ENCODE measurements at regions of chr1 and their contacts with region 1.

Region 1: DNA sequence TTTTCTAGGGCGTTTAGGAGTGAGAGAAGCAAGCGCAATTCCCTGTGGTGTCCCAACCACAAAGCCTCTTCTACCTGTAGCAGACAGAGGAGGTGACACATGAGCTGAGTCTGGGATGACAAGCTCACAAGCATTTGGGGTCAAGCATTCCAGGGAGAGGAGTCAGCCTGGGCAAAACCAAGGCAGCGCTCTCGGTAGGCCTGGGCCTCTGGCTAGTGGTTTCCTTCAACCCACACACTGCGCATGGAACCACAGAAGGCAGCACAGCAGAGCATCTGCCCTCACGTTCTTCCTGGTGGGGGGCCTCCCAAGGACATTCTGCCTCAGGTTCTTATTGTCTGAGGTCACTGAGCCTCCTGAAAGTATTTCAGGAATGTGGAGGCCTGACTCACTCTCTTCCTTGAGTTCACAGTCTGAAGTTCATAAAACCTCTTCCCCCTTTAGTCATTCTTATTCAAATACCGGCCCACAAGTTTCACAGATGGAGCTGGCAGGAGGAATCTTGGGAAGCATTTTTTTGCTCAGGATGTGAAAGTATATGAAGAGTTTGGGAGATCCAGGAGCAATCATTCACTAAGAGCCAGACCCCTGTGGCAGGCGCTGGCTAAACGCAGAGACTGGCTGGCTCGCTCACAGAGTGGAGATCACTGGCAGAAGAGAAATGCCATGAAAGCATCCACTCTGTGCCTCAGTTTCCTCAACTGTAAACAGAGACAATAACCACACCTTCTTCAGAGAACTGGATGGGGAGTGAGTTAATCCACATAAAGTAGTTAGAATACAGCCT is 26.8 kb downstream of the CCN1 start:
- DNase-seq: peak; percentile 85
- ATAC-seq: peak; percentile 78
- H3K4me3 ChIP-seq: peak overlapping the region in 1 of 3 experiments; percentile 23; a peak in 2 of 6 replicates
- H3K27ac ChIP-seq: no peak overlapping the region
- H3K4me1 ChIP-seq: peaks cover 57% of the 10 kb centered on the region
- H3K27me3 ChIP-seq: no peaks in the 10 kb centered on the region
- CTCF ChIP-seq: no peak
- EP300 ChIP-seq: peak; percentile 18 to 73; a peak in 3 of 4 replicates
- POLR2A ChIP-seq: no peak
- RAD21 ChIP-seq: no peak

Region 2: GRCh38 chr1:85397490-85398032 is 209.8 kb before region 1 on chr1:
- CTCF ChIA-PET with region 1: no interaction called
- POLR2A ChIA-PET with region 1: no interaction called
- in situ Hi-C with region 1: no loop called
- intact Hi-C with region 1: no loop called
- DNase-seq: no peak
- ATAC-seq: no peak
- H3K4me3 ChIP-seq: no peak overlapping the region
- H3K27ac ChIP-seq: no peak overlapping the region
- H3K4me1 ChIP-seq: peaks cover 7% of the 10 kb centered on the region; the same call in 1 of the 2 replicates
- H3K27me3 ChIP-seq: no peaks in the 10 kb centered on the region
- CTCF ChIP-seq: no peak
- EP300 ChIP-seq: no peak
- POLR2A ChIP-seq: no peak
- RAD21 ChIP-seq: no peak

Region 3: GRCh38 chr1:85584264-85584781 is 23.0 kb before region 1 on chr1:
- CTCF ChIA-PET with region 1: interaction called, 3 read pairs
- POLR2A ChIA-PET with region 1: interaction called, 58 read pairs
- in situ Hi-C with region 1: no loop called
- intact Hi-C with region 1: loop called (anchors 1 kb)
- DNase-seq: peak; percentile 63
- ATAC-seq: no peak
- H3K4me3 ChIP-seq: no peak overlapping the region
- H3K27ac ChIP-seq: no peak overlapping the region
- H3K4me1 ChIP-seq: peaks cover 52% of the 10 kb centered on the region
- H3K27me3 ChIP-seq: peaks cover 0 to 3% of the 10 kb centered on the region in 2 experiments; a peak in 1 of 5 replicates
- CTCF ChIP-seq: no peak
- EP300 ChIP-seq: no peak; a peak in 1 of 4 replicates
- POLR2A ChIP-seq: peak in 1 of 2 experiments; percentile 83; a peak in 2 of 4 replicates
- RAD21 ChIP-seq: no peak

Region 4: DNA sequence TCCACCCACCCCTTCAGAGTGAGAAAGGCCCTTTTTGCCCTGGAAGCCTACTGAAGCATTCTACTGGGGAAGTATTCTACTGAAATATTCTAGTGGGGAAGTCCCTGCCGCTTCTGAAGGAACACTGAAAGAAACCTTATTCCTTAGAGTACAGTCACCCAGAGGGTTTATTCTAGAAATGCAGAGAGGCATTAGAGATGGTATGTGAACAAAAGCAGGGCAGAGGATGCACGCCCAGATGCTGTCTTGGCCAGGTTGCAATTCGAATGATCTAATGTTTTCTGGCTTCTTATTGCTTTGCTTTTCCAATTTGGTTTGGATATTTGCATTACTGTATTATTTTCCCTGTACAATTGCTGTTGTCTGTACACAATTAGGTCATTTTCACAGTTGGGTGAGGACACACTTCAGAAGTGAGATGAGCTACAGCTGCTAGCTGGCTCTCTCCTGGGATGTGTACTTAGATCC is 10.3 kb after region 1 on chr1:
- CTCF ChIA-PET with region 1: no interaction called
- POLR2A ChIA-PET with region 1: no interaction called
- in situ Hi-C with region 1: no loop called
- intact Hi-C with region 1: no loop called
- DNase-seq: no peak
- ATAC-seq: no peak
- H3K4me3 ChIP-seq: no peak overlapping the region
- H3K27ac ChIP-seq: no peak overlapping the region
- H3K4me1 ChIP-seq: peaks cover 8% of the 10 kb centered on the region
- H3K27me3 ChIP-seq: no peaks in the 10 kb centered on the region
- CTCF ChIP-seq: no peak
- EP300 ChIP-seq: no peak
- POLR2A ChIP-seq: no peak
- RAD21 ChIP-seq: no peak

Region 5: GRCh38 chr1:85628791-85629531 is 21.6 kb after region 1 on chr1:
- CTCF ChIA-PET with region 1: no interaction called
- POLR2A ChIA-PET with region 1: interaction called, 38 read pairs
- in situ Hi-C with region 1: no loop called
- intact Hi-C with region 1: loop called (anchors 2 kb)
- DNase-seq: peak; percentile 82
- ATAC-seq: peak; percentile 96
- H3K4me3 ChIP-seq: peak overlapping the region; percentile 48 to 62 (median 56)
- H3K27ac ChIP-seq: peak overlapping the region; percentile 91
- H3K4me1 ChIP-seq: peaks cover 41% of the 10 kb centered on the region
- H3K27me3 ChIP-seq: no peaks in the 10 kb centered on the region
- CTCF ChIP-seq: no peak
- EP300 ChIP-seq: 0 out of 4 replicates have a peak, but pooled peaks of 1 of the 2 experiments have one; percentile 10
- POLR2A ChIP-seq: peak; percentile 15 to 50; a peak in 2 of 4 replicates
- RAD21 ChIP-seq: no peak

Region 6: GRCh38 chr1:85638412-85638811 is 31.1 kb after region 1 on chr1:
- CTCF ChIA-PET with region 1: no interaction called
- POLR2A ChIA-PET with region 1: interaction called, 15 read pairs
- in situ Hi-C with region 1: no loop called
- intact Hi-C with region 1: loop called (anchors 1 kb)
- DNase-seq: no peak
- ATAC-seq: no peak
- H3K4me3 ChIP-seq: no peak overlapping the region
- H3K27ac ChIP-seq: no peak overlapping the region
- H3K4me1 ChIP-seq: peaks cover 20% of the 10 kb centered on the region
- H3K27me3 ChIP-seq: no peaks in the 10 kb centered on the region
- CTCF ChIP-seq: no peak
- EP300 ChIP-seq: no peak
- POLR2A ChIP-seq: no peak
- RAD21 ChIP-seq: no peak

Region 7: DNA sequence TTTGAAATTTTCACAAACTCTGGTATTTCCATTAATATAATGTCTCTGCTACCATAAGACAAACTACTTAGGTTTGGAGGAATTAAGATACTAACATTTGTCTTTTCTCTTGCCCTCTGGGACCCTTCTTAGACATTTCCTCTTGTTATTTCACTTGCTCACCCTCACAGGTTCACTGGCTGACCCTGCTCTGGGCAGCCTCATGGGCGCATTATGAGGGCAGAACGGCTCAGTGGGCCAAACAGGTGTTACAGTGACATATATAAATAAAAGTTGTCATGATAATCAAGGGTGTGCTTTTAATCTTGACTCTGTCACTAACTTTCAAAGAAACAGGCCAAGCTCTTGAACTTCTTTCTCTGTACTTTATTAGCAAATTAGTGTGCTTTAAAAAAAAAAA is 54.4 kb after region 1 on chr1:
- CTCF ChIA-PET with region 1: no interaction called
- POLR2A ChIA-PET with region 1: no interaction called
- in situ Hi-C with region 1: no loop called
- intact Hi-C with region 1: no loop called
- DNase-seq: no peak
- ATAC-seq: peak; percentile 51; the same call in 1 of the 3 replicates
- H3K4me3 ChIP-seq: no peak overlapping the region
- H3K27ac ChIP-seq: no peak overlapping the region
- H3K4me1 ChIP-seq: peaks cover 13% of the 10 kb centered on the region; the same call in 1 of the 2 replicates
- H3K27me3 ChIP-seq: no peaks in the 10 kb centered on the region; a peak in 1 of 5 replicates
- CTCF ChIP-seq: no peak
- EP300 ChIP-seq: no peak
- POLR2A ChIP-seq: no peak
- RAD21 ChIP-seq: no peak

Region 8: GRCh38 chr1:85692730-85693314 is 85.5 kb after region 1 on chr1:
- CTCF ChIA-PET with region 1: no interaction called
- POLR2A ChIA-PET with region 1: interaction called, 3 read pairs
- in situ Hi-C with region 1: loop called (anchors 10 kb)
- intact Hi-C with region 1: loop called (anchors 5 kb)
- DNase-seq: peak; percentile 37
- ATAC-seq: no peak
- H3K4me3 ChIP-seq: no peak overlapping the region
- H3K27ac ChIP-seq: peak overlapping the region; percentile 5
- H3K4me1 ChIP-seq: no peaks in the 10 kb centered on the region
- H3K27me3 ChIP-seq: no peaks in the 10 kb centered on the region
- CTCF ChIP-seq: peak; percentile 33; the same call in 1 of the 2 replicates
- EP300 ChIP-seq: no peak
- POLR2A ChIP-seq: no peak
- RAD21 ChIP-seq: 0 out of 2 replicates have a peak, but pooled peaks have one; percentile 15

Region 9: DNA sequence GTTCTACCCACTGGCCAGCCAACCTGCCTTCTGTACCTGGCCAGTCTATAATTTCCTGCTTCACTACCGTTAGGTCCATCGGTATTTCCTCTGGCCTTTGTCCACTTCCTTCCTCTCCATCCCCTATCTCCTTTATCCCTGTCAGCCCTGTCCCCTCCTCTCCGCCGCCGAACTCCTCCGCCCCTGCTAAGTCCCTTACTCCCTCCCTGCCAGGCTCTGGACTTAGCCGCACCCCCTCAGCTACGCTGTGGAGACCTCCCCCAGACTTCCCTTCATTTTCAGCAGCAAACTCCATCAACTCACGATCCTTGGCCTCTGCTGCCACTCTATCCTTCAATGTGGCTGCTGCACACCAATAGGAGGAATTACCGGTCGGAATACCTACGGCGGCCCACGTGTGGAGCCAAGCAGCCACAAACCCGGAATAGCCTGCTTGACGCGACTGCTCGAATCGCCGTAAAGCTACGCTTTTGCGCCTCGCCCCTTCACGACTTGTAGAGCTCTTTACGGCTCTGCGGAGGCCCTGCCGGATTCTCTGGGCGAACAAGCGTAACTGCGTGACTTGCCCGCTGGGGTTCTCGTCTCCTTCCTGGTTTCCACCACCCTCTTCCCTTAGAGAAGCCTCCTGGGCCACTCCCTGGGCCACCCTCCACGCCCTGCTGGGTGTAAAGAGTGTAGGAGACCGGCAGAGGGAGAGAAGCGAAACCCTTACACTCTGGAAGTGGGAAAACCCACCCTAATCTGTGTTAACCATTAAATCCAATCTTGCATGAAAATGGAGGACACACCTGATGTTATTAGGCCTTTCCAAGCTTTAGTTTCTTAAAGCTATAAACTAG is 100.9 kb after region 1 on chr1 and contains the start of gene ZNHIT6:
- CTCF ChIA-PET with region 1: no interaction called
- POLR2A ChIA-PET with region 1: interaction called, 8 read pairs
- in situ Hi-C with region 1: no loop called
- intact Hi-C with region 1: loop called (anchors 2 kb)
- DNase-seq: peak; percentile 95
- ATAC-seq: peak; percentile 96
- H3K4me3 ChIP-seq: peak within 1 kb of the TSS; percentile 67 to 84 (median 77)
- H3K27ac ChIP-seq: peak within 1 kb of the TSS; percentile 83
- H3K4me1 ChIP-seq: peaks cover 34% of the 10 kb centered on the region
- H3K27me3 ChIP-seq: no peaks in the 10 kb centered on the region; a peak in 1 of 5 replicates
- CTCF ChIP-seq: peak; percentile 53
- EP300 ChIP-seq: peak in 1 of 2 experiments; percentile 27; a peak in 1 of 4 replicates
- POLR2A ChIP-seq: peak; percentile 68 to 80
- RAD21 ChIP-seq: 0 out of 2 replicates have a peak, but pooled peaks have one; percentile 51
- total RNA-seq, gene ZNHIT6: 15.2 and 18.8 TPM in 2 replicates

Region 10: DNA sequence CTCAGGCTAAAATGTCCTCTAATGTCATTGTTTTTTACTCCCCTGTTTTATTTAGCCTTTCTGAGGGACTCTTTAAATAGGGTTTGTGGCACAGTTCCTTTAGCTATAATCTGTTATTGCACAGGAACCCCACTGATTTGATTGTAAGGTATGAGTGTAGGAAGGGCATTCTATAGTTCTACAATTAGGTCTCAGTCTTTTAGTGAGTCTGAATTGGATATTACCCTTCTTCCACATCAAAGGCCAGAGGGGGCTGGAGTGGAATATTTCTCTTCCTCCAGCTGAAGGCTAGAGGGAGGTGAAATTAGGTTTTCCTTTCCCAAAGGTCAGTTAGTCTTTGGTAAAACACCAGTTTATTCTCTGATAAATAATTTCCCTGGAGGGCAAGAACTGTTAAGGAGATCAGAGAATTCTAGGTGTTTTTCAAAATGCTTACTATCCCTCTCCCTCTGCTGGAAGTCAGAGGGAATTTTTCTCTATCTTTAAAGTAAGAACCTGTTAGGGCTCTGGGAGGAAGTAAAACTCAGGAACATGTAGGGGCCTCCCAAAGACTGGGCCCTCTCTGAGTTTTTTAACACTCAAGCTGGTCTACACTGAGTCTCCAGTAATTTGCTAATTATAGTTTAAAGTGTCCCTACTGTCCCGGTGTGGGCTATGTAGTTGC is 277.2 kb after region 1 on chr1:
- CTCF ChIA-PET with region 1: no interaction called
- POLR2A ChIA-PET with region 1: no interaction called
- in situ Hi-C with region 1: loop called (anchors 10 kb)
- intact Hi-C with region 1: loop called (anchors 5 kb)
- DNase-seq: peak; percentile 14
- ATAC-seq: peak; percentile 74
- H3K4me3 ChIP-seq: no peak overlapping the region
- H3K27ac ChIP-seq: no peak overlapping the region
- H3K4me1 ChIP-seq: no peaks in the 10 kb centered on the region
- H3K27me3 ChIP-seq: no peaks in the 10 kb centered on the region; a peak in 1 of 5 replicates
- CTCF ChIP-seq: peak; percentile 23; the same call in 1 of the 2 replicates
- EP300 ChIP-seq: no peak
- POLR2A ChIP-seq: no peak
- RAD21 ChIP-seq: no peak